ENCODE measurements at regions of chr1 and their contacts with region 1.

Region 1: DNA sequence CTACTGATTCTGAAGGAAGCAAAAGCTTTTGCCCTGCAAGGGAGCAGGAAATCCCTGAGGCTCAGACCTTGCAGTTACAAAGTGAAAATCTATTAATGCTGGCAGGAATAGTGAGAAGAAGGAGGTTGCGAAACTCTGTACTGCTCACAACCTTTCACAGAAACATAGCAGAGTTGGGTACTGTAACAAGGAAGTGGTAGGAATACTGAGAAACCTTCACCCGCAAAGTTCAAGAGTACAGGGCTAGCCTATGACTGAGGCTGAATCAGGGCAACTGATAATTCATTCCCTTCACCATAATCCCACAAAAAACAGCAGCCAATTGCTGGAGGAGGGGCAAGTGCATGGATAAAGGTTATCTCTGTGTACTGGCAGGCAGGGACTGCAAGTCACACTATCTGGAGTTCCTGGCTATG is 23.9 kb upstream of the KCTD3 start:
- DNase-seq: no peak
- H3K4me3 ChIP-seq: no peak overlapping the region
- H3K4me3 Mint-ChIP-seq: no peak overlapping the region
- H3K27ac Mint-ChIP-seq: no peak overlapping the region
- H3K4me1 ChIP-seq: no peaks in the 10 kb centered on the region
- H3K4me1 Mint-ChIP-seq: no peaks in the 10 kb centered on the region
- H3K27me3 ChIP-seq: no peaks in the 10 kb centered on the region
- H3K27me3 Mint-ChIP-seq: no peaks in the 10 kb centered on the region
- CTCF ChIP-seq: no peak

Region 2: GRCh38 chr1:215761446-215761845 is 218.2 kb after region 1 on chr1:
- CTCF ChIA-PET with region 1: no interaction called
- POLR2A ChIA-PET with region 1: no interaction called
- intact Hi-C with region 1: no loop called
- DNase-seq: no peak
- H3K4me3 ChIP-seq: no peak overlapping the region
- H3K4me3 Mint-ChIP-seq: no peak overlapping the region
- H3K27ac Mint-ChIP-seq: no peak overlapping the region
- H3K4me1 ChIP-seq: no peaks in the 10 kb centered on the region
- H3K4me1 Mint-ChIP-seq: no peaks in the 10 kb centered on the region
- H3K27me3 ChIP-seq: no peaks in the 10 kb centered on the region
- H3K27me3 Mint-ChIP-seq: peaks cover 18% of the 10 kb centered on the region
- CTCF ChIP-seq: no peak

Region 3: DNA sequence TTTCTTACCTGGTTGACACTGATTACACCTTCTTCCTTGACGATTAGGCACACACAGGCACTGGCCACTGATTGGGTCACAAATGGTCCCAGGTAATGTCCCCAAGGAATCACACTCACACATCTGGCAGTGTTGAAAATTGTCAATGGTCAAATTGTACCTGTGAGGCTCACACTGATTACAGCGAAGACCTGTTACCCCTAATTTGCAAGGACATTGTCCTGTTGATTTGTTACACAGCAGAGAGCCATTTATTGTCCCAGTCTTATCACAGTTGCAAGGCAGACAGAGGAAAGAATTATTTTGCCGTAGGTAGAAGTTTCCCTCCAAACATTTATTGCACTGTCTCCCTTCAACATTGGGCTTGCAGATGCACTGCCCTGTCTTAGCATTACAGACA is 703.4 kb after region 1 on chr1:
- CTCF ChIA-PET with region 1: no interaction called
- POLR2A ChIA-PET with region 1: no interaction called
- intact Hi-C with region 1: loop called (anchors 5 kb)
- DNase-seq: no peak
- H3K4me3 ChIP-seq: no peak overlapping the region
- H3K4me3 Mint-ChIP-seq: no peak overlapping the region
- H3K27ac Mint-ChIP-seq: no peak overlapping the region
- H3K4me1 ChIP-seq: no peaks in the 10 kb centered on the region
- H3K4me1 Mint-ChIP-seq: no peaks in the 10 kb centered on the region
- H3K27me3 ChIP-seq: no peaks in the 10 kb centered on the region; the same call in 1 of the 2 replicates
- H3K27me3 Mint-ChIP-seq: no peaks in the 10 kb centered on the region
- CTCF ChIP-seq: no peak